Activated T-helper 2 cell treated with anti-CD3 and anti-CD28 coated beads, Interferon-gamma antibody, Interleukin-2, Interleukin-4, amounts not matched to agents 10 μg/mL and 5 μg/mL and 100 μg/mL, durations not matched to agents 14 hours and 24 hours and 36 hours (primary cell): ENCODE measurements at regions of chr11 and their contacts with region 1.

Region 1: DNA sequence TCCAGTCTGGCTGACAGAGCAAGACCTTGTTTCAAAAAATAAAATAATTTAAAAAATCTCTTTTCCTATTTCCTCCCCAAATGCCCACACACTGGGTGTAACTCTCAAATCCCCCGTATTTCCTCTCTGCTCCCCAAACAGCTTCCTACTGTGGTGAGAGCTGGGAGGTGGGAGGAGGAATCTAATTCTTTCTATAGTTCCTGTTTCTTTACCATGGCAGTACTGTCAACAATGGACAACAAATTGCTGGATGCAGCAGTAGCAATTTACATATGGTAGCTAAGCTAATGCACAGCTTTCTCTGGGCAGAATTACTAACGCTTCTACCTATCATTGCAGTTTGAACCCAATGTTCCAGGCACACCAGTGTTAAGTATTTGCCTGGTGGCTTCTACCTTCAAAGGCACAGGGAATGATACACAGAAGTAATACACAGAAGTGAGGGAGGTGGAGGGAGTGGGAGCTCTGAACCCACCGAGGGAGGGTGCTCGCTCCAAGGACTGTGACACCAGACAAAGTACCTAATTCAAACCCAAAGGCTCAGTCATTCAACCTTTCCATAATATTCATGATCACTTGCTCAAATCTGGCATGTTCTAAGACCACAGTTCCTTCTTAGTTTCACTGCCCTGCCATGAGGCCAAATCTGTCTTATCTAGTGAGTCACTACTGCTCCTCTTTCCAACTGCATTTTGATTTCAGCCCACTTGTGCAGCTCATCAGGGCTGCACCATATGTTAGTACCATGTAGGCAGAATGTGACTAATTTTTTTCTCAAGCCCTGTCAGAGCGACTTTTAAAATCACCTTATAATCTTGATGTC is 37.9 kb downstream of the CELF1 start:
- DNase-seq: no peak
- H3K4me3 Mint-ChIP-seq: peak overlapping the region; percentile 31
- H3K27ac Mint-ChIP-seq: peak overlapping the region; percentile 92
- H3K4me1 Mint-ChIP-seq: peaks cover 64% of the 10 kb centered on the region
- H3K27me3 Mint-ChIP-seq: no peaks in the 10 kb centered on the region

Region 2: GRCh38 chr11:47477323-47477722 is 37.7 kb before region 1 on chr11:
- intact Hi-C with region 1: loop called (anchors 2 kb)
- DNase-seq: no peak
- H3K4me3 Mint-ChIP-seq: no peak overlapping the region
- H3K27ac Mint-ChIP-seq: peak overlapping the region; percentile 80
- H3K4me1 Mint-ChIP-seq: peaks cover 13% of the 10 kb centered on the region
- H3K27me3 Mint-ChIP-seq: no peaks in the 10 kb centered on the region

Region 3: DNA sequence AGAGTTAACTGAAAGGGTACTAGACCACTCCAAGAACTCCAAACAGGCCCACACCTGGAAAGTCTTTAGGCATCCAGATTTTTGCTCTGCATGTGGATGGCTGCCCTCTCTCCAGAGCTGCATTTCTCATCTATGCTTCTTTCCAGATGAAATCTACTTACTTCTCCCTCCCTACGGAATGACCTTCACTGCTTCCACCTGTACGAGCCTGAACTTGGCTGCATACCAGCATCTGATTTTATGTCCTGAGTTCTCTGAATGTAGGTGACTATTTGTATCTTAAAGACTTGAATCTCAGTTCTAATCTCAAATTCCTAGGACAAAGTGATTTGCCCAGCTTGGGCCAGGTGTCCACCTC is 24.6 kb after region 1 on chr11:
- intact Hi-C with region 1: loop called (anchors 2 kb)
- DNase-seq: no peak
- H3K4me3 Mint-ChIP-seq: no peak overlapping the region
- H3K27ac Mint-ChIP-seq: peak overlapping the region; percentile 84
- H3K4me1 Mint-ChIP-seq: peaks cover 30% of the 10 kb centered on the region
- H3K27me3 Mint-ChIP-seq: no peaks in the 10 kb centered on the region

Region 4: DNA sequence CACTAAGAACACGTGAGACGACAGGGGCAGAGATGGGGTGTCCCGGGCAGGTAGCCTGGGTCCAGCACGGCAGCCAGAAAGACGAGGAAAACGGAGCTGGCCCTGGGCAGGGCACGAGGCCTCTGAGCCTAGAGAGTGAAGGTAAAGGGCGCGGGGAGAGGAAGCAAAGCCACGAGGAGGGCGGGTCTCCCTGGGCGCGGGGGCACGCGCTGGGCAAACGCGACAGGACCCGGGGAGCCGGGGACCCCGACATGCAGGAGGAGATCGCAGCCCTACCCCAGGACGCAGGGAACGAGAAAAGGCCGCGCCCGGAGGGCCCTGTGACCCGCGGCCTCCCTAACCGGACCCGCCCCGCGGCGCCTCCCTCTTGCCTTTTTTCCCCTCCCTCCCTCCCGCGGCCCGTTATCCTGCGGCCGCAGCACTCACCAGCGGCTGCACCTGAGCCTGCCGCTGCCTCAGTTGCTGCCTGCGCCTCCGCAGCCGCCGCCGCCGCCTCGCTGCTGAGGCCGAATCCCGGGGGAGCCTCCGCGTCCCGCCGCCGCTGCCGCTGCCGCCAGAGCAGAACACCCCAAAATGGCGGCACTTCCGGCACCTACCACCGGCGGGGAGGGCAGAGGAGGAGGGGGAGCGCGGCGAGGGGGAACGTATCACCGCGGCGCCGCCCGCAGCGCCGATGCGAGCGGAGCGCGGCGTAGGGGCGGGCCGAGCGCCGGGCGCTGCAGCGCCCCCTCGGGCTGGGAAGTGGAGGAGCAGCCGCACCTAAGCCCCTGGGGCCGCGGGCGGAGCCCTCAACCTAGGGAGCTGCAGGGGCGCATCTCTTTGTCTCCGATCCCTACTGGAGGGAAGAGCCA is 37.8 kb after region 1 on chr11 and contains the start of gene CELF1:
- intact Hi-C with region 1: loop called (anchors 1 kb)
- DNase-seq: peak; percentile 92
- H3K4me3 Mint-ChIP-seq: peak within 1 kb of the TSS; percentile 100
- H3K27ac Mint-ChIP-seq: peak within 1 kb of the TSS; percentile 95
- H3K4me1 Mint-ChIP-seq: peaks cover 31% of the 10 kb centered on the region
- H3K27me3 Mint-ChIP-seq: no peaks in the 10 kb centered on the region
- total RNA-seq, gene CELF1: 129 and 132 TPM in 2 replicates

Region 5: DNA sequence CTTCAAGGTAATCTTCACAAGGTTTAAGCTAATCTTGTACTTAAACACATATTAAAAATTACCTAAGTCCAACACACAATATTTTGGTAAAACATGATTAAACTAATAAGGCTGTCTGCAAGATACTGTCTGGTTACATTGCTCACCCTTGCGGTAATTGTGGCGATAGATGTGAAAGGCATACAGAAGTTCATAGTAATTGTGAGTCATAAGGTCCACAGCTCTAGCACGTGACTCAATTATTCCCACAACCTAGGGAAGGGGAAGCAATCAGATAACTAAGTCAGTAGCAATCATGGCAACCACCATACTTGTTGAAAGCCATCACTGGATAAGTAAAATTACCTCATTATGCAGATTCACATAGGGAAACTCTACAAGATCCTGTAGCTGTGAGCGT is 282.6 kb after region 1 on chr11:
- intact Hi-C with region 1: loop called (anchors 10 kb)
- DNase-seq: peak; percentile 19
- H3K4me3 Mint-ChIP-seq: no peak overlapping the region
- H3K27ac Mint-ChIP-seq: peak overlapping the region; percentile 82
- H3K4me1 Mint-ChIP-seq: peaks cover 14% of the 10 kb centered on the region
- H3K27me3 Mint-ChIP-seq: no peaks in the 10 kb centered on the region